ENCODE measurements at regions of chr10 and their contacts with region 1.

Region 1: DNA sequence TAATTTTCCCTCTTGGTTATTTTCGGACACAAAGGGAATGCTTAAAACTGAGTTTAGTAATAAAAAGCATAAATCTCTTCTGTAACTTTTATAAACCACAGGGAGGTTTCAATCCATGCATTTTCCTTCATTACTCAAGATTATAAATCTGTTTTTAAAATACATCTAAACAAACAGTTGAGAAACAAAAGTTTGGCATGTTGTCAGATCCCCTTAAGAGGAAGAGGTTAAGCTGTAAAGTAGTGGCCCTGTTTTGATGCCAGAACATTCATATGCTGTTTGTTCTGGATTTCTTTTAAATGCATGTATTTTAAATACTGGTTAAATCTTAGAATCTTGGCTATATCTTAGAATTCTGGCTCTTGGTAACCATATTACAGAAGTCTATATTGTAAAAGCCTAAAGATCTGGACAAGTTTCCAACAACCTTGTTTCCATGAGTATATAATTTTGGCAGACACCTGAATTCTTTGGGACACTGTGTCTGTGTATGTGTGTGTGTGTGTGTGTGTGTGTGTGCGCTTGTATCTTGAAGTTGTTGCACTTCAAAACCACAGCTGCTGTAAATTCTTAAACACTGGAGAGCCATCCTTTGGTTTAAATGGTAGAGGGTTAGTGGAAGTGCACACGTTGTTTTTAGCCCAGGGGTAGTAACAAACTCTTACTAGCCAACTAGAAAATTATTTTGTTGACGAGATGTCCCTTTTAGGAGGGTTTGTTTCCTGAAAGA is 6.8 kb upstream of the SEMA4G start:
- DNase-seq: no peak
- ATAC-seq: no peak
- H3K4me3 ChIP-seq: no peak overlapping the region
- H3K4me3 Mint-ChIP-seq: no peak overlapping the region
- H3K27ac ChIP-seq: no peak overlapping the region
- H3K27ac Mint-ChIP-seq: no peak overlapping the region
- H3K4me1 ChIP-seq: no peaks in the 10 kb centered on the region
- H3K4me1 Mint-ChIP-seq: no peaks in the 10 kb centered on the region
- H3K27me3 ChIP-seq: no peaks in the 10 kb centered on the region
- H3K27me3 Mint-ChIP-seq: no peaks in the 10 kb centered on the region
- CTCF ChIP-seq: no peak

Region 2: DNA sequence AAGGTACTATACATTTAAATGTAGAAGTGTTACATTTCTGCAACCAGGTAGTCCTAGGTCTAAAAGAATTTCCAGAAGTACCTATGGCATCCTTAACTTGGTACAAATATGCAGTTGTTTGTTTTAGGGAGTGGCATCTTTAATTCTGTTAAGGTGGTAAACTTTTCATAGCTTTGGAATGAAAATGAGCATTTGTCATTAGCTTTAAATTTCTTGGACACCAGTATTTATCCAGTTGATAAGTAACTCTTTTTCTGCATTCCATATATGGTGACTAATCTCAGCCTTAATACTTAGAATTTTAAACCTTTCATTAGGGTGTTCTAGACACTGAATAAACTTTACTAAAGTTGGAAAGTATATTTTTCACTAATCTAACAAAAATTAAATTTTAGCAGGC is 38.9 kb before region 1 on chr10:
- CTCF ChIA-PET with region 1: no interaction called
- POLR2A ChIA-PET with region 1: no interaction called
- intact Hi-C with region 1: loop called in 1 of 2 experiments (anchors 5 kb)
- DNase-seq: no peak
- ATAC-seq: no peak
- H3K4me3 ChIP-seq: no peak overlapping the region
- H3K4me3 Mint-ChIP-seq: no peak overlapping the region
- H3K27ac ChIP-seq: no peak overlapping the region
- H3K27ac Mint-ChIP-seq: no peak overlapping the region
- H3K4me1 ChIP-seq: no peaks in the 10 kb centered on the region
- H3K4me1 Mint-ChIP-seq: peaks cover 10% of the 10 kb centered on the region
- H3K27me3 ChIP-seq: no peaks in the 10 kb centered on the region
- H3K27me3 Mint-ChIP-seq: no peaks in the 10 kb centered on the region
- CTCF ChIP-seq: no peak

Region 3: DNA sequence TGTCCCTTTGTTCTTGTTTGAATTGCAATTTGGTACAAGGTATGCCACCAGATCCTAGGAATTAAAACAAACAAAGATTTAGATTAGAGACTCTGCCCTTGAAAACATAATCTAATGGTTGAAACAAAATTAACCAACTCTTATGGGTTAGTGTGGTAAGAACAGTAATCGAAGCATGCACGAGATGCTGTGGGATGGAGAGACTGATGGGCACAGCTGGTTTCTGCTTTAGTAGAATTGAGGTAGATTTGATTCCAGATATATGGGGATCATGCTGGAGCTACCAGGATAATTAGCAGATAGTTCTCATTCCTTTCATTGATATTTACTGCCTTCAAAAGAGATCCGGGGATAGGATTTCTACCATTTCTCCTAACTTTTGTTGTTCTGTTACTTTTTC is 13.6 kb before region 1 on chr10:
- CTCF ChIA-PET with region 1: no interaction called
- POLR2A ChIA-PET with region 1: no interaction called
- intact Hi-C with region 1: no loop called
- DNase-seq: no peak
- ATAC-seq: no peak
- H3K4me3 ChIP-seq: no peak overlapping the region
- H3K4me3 Mint-ChIP-seq: no peak overlapping the region
- H3K27ac ChIP-seq: no peak overlapping the region
- H3K27ac Mint-ChIP-seq: no peak overlapping the region
- H3K4me1 ChIP-seq: peaks cover 3% of the 10 kb centered on the region
- H3K4me1 Mint-ChIP-seq: peaks cover 2% of the 10 kb centered on the region
- H3K27me3 ChIP-seq: no peaks in the 10 kb centered on the region
- H3K27me3 Mint-ChIP-seq: no peaks in the 10 kb centered on the region
- CTCF ChIP-seq: no peak